Activated naive CD4-positive, alpha-beta T cell treated with anti-CD3 and anti-CD28 coated beads for 36 hours (primary cell): ENCODE measurements at regions of chr18 and their contacts with region 1.

Region 1: DNA sequence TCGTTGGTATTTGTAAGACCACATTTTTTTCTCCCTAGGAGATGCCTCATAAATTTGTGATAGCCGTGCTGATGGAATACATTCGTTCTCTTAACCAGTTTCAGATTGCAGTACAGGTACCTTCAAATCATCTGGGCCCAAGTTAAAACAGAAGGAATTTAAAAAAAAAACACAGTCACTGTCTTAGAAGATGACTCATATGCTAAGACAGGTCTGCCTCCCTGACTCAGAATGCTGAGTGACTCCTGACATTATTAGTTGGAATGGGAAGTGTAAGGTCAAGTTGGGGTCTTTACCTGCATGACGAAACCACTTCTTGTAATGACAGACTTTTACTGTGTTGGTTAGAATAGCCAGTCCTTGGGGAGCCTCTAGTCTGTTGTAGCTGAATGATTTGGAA is 26.3 kb downstream of the RMC1 start:
- DNase-seq: peak; percentile 36
- H3K4me3 Mint-ChIP-seq: no peak overlapping the region
- H3K27ac Mint-ChIP-seq: peak overlapping the region; percentile 20
- H3K4me1 Mint-ChIP-seq: peaks cover 16% of the 10 kb centered on the region
- H3K27me3 Mint-ChIP-seq: no peaks in the 10 kb centered on the region

Region 2: GRCh38 chr18:23540867-23541266 is 11.3 kb after region 1 on chr18:
- CTCF ChIA-PET with region 1: interaction called, 4 read pairs
- intact Hi-C with region 1: loop called (anchors 1 kb)
- DNase-seq: peak; percentile 27
- H3K4me3 Mint-ChIP-seq: peak overlapping the region; percentile 5
- H3K27ac Mint-ChIP-seq: peak overlapping the region; percentile 19
- H3K4me1 Mint-ChIP-seq: peaks cover 35% of the 10 kb centered on the region
- H3K27me3 Mint-ChIP-seq: no peaks in the 10 kb centered on the region

Region 3: DNA sequence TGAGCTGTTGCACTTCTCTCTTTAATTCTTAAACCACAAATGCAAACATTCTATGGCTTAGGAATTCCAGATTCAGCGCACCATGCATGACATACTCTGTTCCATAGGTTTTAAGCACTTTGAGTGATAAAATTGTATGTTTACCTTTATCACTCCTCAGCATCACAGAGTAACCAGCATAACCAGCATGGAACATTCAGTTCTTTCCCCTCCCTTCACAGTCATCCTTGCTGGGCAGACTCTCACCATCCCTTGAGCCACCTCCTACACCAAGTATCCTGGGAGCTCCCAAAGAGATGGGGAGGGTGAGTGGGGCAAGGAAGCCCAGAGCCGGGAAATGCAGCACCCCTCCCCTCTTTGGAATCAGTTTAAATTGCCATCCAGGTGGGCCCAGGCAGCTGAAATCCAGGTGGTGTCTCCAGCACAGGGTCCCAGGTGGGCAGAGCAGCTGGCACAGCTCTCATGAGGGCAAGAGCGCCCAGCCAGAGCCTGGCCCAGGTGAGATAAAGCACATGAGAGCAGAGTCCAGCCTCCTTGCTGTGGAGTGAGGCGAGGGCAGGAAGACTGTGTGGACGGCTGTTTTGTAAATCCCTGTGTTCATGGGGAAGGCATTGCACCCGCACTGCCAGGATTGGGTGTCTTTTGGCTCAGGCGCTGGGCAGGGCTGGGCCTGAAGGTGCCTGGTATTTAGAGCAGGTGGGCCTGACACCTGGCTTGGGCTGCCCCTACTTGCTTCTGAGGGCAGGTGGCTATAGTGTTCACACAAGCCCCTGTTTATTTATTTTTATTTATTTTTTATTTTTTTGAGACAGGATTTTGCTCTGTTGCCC is 196.4 kb after region 1 on chr18:
- CTCF ChIA-PET with region 1: no interaction called
- intact Hi-C with region 1: no loop called
- DNase-seq: no peak
- H3K4me3 Mint-ChIP-seq: no peak overlapping the region
- H3K27ac Mint-ChIP-seq: no peak overlapping the region
- H3K4me1 Mint-ChIP-seq: no peaks in the 10 kb centered on the region
- H3K27me3 Mint-ChIP-seq: peaks cover 2% of the 10 kb centered on the region

Region 4: GRCh38 chr18:23784832-23785245 is 255.2 kb after region 1 on chr18:
- CTCF ChIA-PET with region 1: no interaction called
- intact Hi-C with region 1: no loop called
- DNase-seq: no peak
- H3K4me3 Mint-ChIP-seq: no peak overlapping the region
- H3K27ac Mint-ChIP-seq: no peak overlapping the region
- H3K4me1 Mint-ChIP-seq: no peaks in the 10 kb centered on the region
- H3K27me3 Mint-ChIP-seq: no peaks in the 10 kb centered on the region